SK-N-SH (cell line): ENCODE measurements at regions of chr6 and their contacts with region 1.

Region 1: GRCh38 chr6:26537846-26538571 is at the start of gene HMGN4:
- DNase-seq: peak; percentile 87
- H3K4me3 ChIP-seq: peak within 1 kb of the TSS; percentile 60 to 97
- H3K27ac ChIP-seq: peak within 1 kb of the TSS; percentile 90 to 96
- H3K4me1 ChIP-seq: peaks cover 11 to 17% of the 10 kb centered on the region in 2 experiments
- H3K27me3 ChIP-seq: no peaks in the 10 kb centered on the region
- CTCF ChIP-seq: peak; percentile 17; the same call in 1 of the 2 replicates
- EP300 ChIP-seq: no peak
- RAD21 ChIP-seq: no peak
- polyA plus RNA-seq, gene HMGN4: 76.3 and 79.7 TPM in 2 replicates

Region 2: GRCh38 chr6:26553635-26554446 is 15.8 kb after region 1 on chr6:
- CTCF ChIA-PET with region 1: interaction called, 17 read pairs
- POLR2A ChIA-PET with region 1: interaction called, 16 read pairs
- DNase-seq: no peak
- H3K4me3 ChIP-seq: peak overlapping the region; percentile 68 to 84
- H3K27ac ChIP-seq: peak overlapping the region; percentile 83
- H3K4me1 ChIP-seq: peaks cover 0 to 3% of the 10 kb centered on the region in 2 experiments; a peak in 2 of 4 replicates
- H3K27me3 ChIP-seq: no peaks in the 10 kb centered on the region
- CTCF ChIP-seq: no peak
- EP300 ChIP-seq: no peak; a peak in 1 of 4 replicates
- RAD21 ChIP-seq: no peak

Region 3: DNA sequence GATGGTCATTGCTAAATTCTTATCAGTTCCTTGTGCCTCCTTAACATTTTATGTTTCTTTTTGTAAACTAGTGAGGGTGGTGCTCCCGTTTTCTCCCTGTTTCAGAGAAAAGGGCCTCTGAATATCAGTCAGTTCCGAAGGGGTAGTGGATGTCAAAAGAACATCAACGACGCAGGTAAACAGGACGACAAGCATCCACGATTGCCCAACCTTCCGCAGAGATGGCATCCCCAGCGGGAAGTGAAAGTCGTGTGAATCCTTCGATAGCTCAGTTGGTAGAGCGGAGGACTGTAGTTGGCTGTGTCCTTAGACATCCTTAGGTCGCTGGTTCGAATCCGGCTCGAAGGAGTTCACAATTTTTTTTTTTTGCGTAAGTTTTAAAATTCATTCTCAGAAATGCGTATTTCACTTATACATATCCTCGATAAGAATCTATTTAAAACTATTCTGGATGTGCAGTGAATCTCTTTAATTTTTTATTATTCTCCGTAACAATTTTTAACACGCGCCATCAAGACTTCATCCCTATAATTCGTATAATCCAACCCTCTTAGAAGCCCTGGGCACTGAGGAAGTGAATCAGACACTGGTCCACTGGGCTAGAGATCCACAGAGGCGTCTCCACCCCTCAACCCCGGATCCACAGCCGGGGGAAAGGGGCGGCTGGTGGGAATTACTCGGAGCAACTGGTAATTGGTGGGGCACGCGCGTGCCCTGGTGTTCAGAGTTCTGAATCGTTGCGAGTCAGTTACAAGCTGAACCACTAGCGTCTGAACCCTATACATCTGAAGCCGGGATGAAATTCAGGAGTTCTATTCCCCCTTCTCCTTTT is 30.8 kb after region 1 on chr6:
- CTCF ChIA-PET with region 1: interaction called, 12 read pairs
- POLR2A ChIA-PET with region 1: interaction called, 3 read pairs
- DNase-seq: peak; percentile 75
- H3K4me3 ChIP-seq: peak overlapping the region; percentile 66 to 83
- H3K27ac ChIP-seq: peak overlapping the region in 1 of 2 experiments; percentile 34; a peak in 3 of 4 replicates
- H3K4me1 ChIP-seq: no peaks in the 10 kb centered on the region; a peak in 1 of 4 replicates
- H3K27me3 ChIP-seq: no peaks in the 10 kb centered on the region
- CTCF ChIP-seq: peak; percentile 41
- EP300 ChIP-seq: no peak
- RAD21 ChIP-seq: peak; percentile 57